Esophagus muscularis mucosa (tissue), 4 donors: ENCODE measurements at regions of chr11 and their contacts with region 1.

Region 1: DNA sequence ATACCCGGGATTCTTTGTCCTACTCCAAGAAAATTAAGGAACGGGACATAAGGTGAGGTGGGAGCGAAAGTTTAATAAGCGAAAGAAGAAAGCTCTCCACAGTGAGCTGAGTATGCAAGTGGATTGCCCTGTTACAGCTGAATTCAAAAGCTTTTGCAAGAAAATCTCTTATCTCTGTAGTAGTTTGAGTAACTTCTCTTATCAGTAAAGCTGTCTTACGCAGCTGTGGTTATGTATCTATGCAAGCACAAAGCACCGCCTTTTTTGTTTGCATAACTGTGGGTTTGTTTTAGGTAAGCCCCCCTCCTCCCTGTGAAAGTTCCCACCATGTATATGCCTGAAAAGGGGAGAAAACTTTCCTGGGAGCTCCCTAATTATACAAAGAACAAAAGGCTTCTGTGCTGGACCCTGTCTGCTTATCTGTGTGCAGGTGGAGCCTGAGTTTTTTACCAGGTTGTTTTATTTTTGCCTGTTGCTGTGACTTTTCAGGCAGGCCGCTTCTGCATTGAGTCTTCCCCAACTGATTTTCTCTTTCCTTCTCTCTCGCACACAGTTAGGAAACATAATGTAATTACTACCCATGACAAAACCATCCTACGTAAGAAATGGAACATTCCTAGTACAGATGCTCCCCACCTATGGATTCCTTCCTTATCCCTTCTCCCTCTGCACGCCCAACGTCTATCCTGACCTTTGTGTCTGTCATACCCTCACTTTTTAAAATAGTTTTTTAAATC is 837 bp upstream of the PLAAT5 start:
- DNase-seq: no peak
- H3K4me3 ChIP-seq: peak overlapping the region; percentile 64 to 72 (median 68)
- H3K27ac ChIP-seq: peak overlapping the region; percentile 83 to 90 (median 87)
- H3K4me1 ChIP-seq: peaks cover 8 to 53% (median 38%) of the 10 kb centered on the region in 4 donors
- H3K27me3 ChIP-seq: no peaks in the 10 kb centered on the region
- CTCF ChIP-seq: no peak
- EP300 ChIP-seq: no peak
- POLR2A ChIP-seq: no peak

Region 2: GRCh38 chr11:63532799-63533475 is 41.1 kb after region 1 on chr11:
- intact Hi-C with region 1: loop called (anchors 2 kb)
- DNase-seq: no peak
- H3K4me3 ChIP-seq: no peak overlapping the region
- H3K27ac ChIP-seq: no peak overlapping the region
- H3K4me1 ChIP-seq: peaks cover 22 to 29% (median 25%) of the 10 kb centered on the region in 4 donors
- H3K27me3 ChIP-seq: no peaks in the 10 kb centered on the region
- CTCF ChIP-seq: no peak
- EP300 ChIP-seq: no peak
- POLR2A ChIP-seq: no peak